ENCODE measurements at regions of chr15 and their contacts with region 1.

Region 1: GRCh38 chr15:76931397-76932007 is at the start of gene RCN2:
- DNase-seq: peak; percentile 66 to 87
- H3K4me3 ChIP-seq: peak within 1 kb of the TSS; percentile 79 to 92 (median 86)
- H3K27ac ChIP-seq: peak within 1 kb of the TSS; percentile 86
- H3K4me1 ChIP-seq: peaks cover 0 to 3% (median 0%) of the 10 kb centered on the region in 4 experiments; a peak in 2 of 7 replicates
- H3K27me3 ChIP-seq: peaks cover 0 to 1% (median 0%) of the 10 kb centered on the region in 4 experiments; a peak in 1 of 7 replicates
- CTCF ChIP-seq: no peak
- EP300 ChIP-seq: no peak
- POLR2A ChIP-seq: peak; percentile 60 to 82
- RAD21 ChIP-seq: no peak
- total RNA-seq, gene RCN2: 125 and 137 TPM in 2 replicates

Region 2: GRCh38 chr15:76905013-76905839 is 26.3 kb before region 1 on chr15 and contains the start of gene SCAPER:
- CTCF ChIA-PET with region 1: no interaction called
- POLR2A ChIA-PET with region 1: interaction called, 14 read pairs
- DNase-seq: peak; percentile 84 to 95
- H3K4me3 ChIP-seq: peak within 1 kb of the TSS; percentile 54 to 71 (median 63)
- H3K27ac ChIP-seq: peak within 1 kb of the TSS; percentile 62; the same call in 1 of the 2 replicates
- H3K4me1 ChIP-seq: peaks cover 1 to 7% (median 4%) of the 10 kb centered on the region in 4 experiments; a peak in 5 of 7 replicates
- H3K27me3 ChIP-seq: peaks cover 0 to 4% (median 0%) of the 10 kb centered on the region in 4 experiments; a peak in 2 of 7 replicates
- CTCF ChIP-seq: no peak
- EP300 ChIP-seq: peak in 1 of 2 experiments; percentile 2; a peak in 1 of 3 replicates
- POLR2A ChIP-seq: peak in 1 of 2 experiments; percentile 67; a peak in 2 of 3 replicates
- RAD21 ChIP-seq: no peak
- total RNA-seq, gene SCAPER: 6.8 and 6.9 TPM in 2 replicates

Region 3: DNA sequence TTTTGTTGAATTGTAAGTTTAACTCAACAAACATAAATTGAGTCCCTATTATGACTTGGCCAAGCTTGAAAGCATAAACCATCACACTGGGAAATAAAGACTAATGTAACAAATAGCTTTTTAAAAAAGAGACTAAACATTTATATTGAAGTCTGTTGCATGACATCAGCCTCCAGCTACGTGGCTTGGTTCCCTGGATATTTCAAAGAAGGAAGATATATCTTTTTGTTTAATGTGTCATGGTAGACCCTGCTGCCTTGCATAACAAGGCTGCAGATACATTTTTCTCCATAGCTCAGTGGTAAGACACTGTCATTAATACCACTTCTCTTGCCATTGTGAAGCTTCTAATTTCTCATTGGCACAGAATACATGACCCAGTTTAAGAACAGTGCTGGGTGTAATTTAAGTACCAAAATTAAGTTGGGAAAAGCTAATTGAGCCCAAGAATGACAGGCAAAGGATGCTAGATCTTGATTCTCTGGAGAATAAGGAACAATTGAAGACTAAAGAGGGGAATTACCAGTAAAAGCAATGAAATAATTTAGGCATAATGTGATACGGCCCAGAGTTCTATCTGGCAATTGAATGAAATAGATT is 14.1 kb after region 1 on chr15:
- CTCF ChIA-PET with region 1: interaction called, 3 read pairs
- POLR2A ChIA-PET with region 1: interaction called, 26 read pairs
- DNase-seq: no peak
- H3K4me3 ChIP-seq: no peak overlapping the region
- H3K27ac ChIP-seq: no peak overlapping the region
- H3K4me1 ChIP-seq: peaks cover 0 to 4% (median 1%) of the 10 kb centered on the region in 4 experiments; a peak in 2 of 7 replicates
- H3K27me3 ChIP-seq: no peaks in the 10 kb centered on the region
- CTCF ChIP-seq: no peak
- EP300 ChIP-seq: no peak
- POLR2A ChIP-seq: no peak
- RAD21 ChIP-seq: no peak

Region 4: GRCh38 chr15:76954744-76955143 is 23.2 kb after region 1 on chr15:
- CTCF ChIA-PET with region 1: no interaction called
- POLR2A ChIA-PET with region 1: interaction called, 11 read pairs
- DNase-seq: no peak
- H3K4me3 ChIP-seq: no peak overlapping the region
- H3K27ac ChIP-seq: no peak overlapping the region
- H3K4me1 ChIP-seq: 0 out of 7 replicates have a peak, but pooled peaks cover 0 to 2% (median 0%) of the 10 kb centered on the region in 4 experiments
- H3K27me3 ChIP-seq: no peaks in the 10 kb centered on the region
- CTCF ChIP-seq: no peak
- EP300 ChIP-seq: no peak
- POLR2A ChIP-seq: no peak
- RAD21 ChIP-seq: no peak

Measured in H1 (cell line).